ENCODE measurements at regions of chr6 and their contacts with region 1.

Region 1: GRCh38 chr6:53070806-53071205 is 5.6 kb downstream of the FBXO9 start:
- DNase-seq: no peak
- H3K4me3 Mint-ChIP-seq: no peak overlapping the region
- H3K27ac Mint-ChIP-seq: peak overlapping the region; percentile 83
- H3K4me1 Mint-ChIP-seq: peaks cover 34% of the 10 kb centered on the region
- H3K27me3 Mint-ChIP-seq: no peaks in the 10 kb centered on the region

Region 2: DNA sequence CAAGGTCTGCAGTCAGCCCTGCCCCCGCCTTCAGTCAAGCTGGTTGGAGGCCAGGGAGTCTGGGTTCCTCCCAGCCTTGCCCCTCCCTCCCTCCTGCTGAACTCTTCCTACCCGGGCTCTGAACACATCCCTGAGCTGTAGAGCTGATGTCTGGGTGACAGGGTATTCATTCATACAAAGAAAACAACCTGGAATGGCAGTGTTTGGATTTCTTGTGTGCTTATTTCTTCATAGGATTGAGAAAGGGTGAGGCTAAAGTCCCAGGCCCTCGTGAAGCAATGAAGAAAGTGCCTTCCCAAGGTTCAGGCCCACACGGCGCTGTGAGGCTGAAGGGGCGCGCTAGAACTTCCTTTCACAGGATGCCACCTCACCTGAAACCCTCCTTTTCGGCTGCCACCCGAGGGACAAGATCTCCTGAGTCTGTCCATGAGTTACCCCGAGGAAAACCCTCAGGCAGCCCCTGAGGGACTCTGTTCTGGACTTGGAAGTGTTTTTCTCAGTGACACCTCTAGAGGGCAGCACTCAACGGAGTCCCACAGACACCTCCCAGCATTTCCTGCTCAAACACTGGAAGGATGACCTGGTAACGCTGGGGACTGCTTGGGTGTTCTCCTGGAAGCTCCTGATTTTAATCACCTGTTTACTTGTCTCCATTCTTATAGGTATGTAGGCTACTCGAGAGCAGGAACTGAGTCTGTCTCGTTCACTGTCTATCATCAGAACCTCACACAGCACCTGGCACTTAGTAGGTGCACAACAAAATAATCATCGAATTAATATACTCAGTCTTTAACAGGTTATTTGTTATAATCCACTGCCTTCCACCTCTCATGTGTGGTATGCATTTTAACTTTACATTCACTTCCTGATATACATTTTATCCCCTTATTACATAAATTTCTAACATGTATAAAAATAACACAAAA is 255.4 kb before region 1 on chr6:
- intact Hi-C with region 1: loop called (anchors 5 kb)
- DNase-seq: peak; percentile 24
- H3K4me3 Mint-ChIP-seq: no peak overlapping the region
- H3K27ac Mint-ChIP-seq: no peak overlapping the region
- H3K4me1 Mint-ChIP-seq: no peaks in the 10 kb centered on the region
- H3K27me3 Mint-ChIP-seq: peaks cover 15% of the 10 kb centered on the region

Region 3: DNA sequence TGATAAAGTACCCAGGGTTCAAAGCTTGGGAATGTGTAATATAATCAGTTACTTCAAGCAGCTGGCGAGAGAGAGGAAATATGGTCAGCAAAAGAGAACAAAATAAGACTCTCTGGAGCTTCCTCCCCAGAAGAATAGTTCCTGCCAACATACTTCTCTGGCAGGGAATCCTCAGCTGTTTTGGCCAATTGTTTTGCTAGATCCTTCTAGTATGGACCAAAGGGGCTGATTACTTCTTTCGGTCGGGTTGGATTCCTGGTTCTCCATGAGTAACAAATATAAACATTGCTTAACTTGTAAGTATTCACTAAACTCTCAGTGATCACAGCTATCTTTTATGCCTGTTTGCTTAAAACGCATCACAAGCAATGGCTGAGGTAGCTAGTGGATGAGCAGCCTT is 37.0 kb before region 1 on chr6:
- intact Hi-C with region 1: no loop called
- DNase-seq: no peak
- H3K4me3 Mint-ChIP-seq: no peak overlapping the region
- H3K27ac Mint-ChIP-seq: no peak overlapping the region
- H3K4me1 Mint-ChIP-seq: peaks cover 8% of the 10 kb centered on the region
- H3K27me3 Mint-ChIP-seq: no peaks in the 10 kb centered on the region

Region 4: GRCh38 chr6:53794720-53795253 is 724.0 kb after region 1 on chr6 and contains the start of gene LRRC1:
- intact Hi-C with region 1: no loop called
- DNase-seq: peak; percentile 87
- H3K4me3 Mint-ChIP-seq: peak within 1 kb of the TSS; percentile 88
- H3K27ac Mint-ChIP-seq: peak within 1 kb of the TSS; percentile 74
- H3K4me1 Mint-ChIP-seq: peaks cover 25% of the 10 kb centered on the region
- H3K27me3 Mint-ChIP-seq: peaks cover 46% of the 10 kb centered on the region
- total RNA-seq, gene LRRC1: 1.9 and 3.4 TPM in 2 replicates

Measured in activated T-helper 2 cell treated with anti-CD3 and anti-CD28 coated beads, Interferon-gamma antibody, Interleukin-2, Interleukin-4, amounts not matched to agents 10 μg/mL and 5 μg/mL and 100 μg/mL, durations not matched to agents 14 hours and 24 hours and 36 hours (primary cell).